A549 (cell line): ENCODE measurements at regions of chr11 and their contacts with region 1.

Region 1: GRCh38 chr11:47161134-47161854 is 15.4 kb downstream of the ARFGAP2 start:
- DNase-seq: peak; percentile 75 to 92
- ATAC-seq: peak; percentile 79 to 90
- H3K4me3 ChIP-seq: no peak overlapping the region
- H3K27ac ChIP-seq: no peak overlapping the region
- H3K4me1 ChIP-seq: no peaks in the 10 kb centered on the region
- CTCF ChIP-seq: peak; percentile 76
- EP300 ChIP-seq: no peak
- POLR2A ChIP-seq: no peak
- RAD21 ChIP-seq: peak; percentile 66 to 68

Region 2: GRCh38 chr11:46889689-46890475 is 271.4 kb before region 1 on chr11:
- CTCF ChIA-PET with region 1: interaction called, 120 read pairs
- POLR2A ChIA-PET with region 1: no interaction called
- DNase-seq: peak; percentile 62 to 75
- ATAC-seq: peak; percentile 90 to 92
- H3K4me3 ChIP-seq: no peak overlapping the region
- H3K27ac ChIP-seq: no peak overlapping the region
- H3K4me1 ChIP-seq: no peaks in the 10 kb centered on the region
- CTCF ChIP-seq: peak; percentile 91
- EP300 ChIP-seq: no peak
- POLR2A ChIP-seq: no peak
- RAD21 ChIP-seq: peak; percentile 91 to 96

Region 3: GRCh38 chr11:46896719-46897406 is 264.4 kb before region 1 on chr11:
- CTCF ChIA-PET with region 1: interaction called, 120 read pairs
- POLR2A ChIA-PET with region 1: no interaction called
- DNase-seq: peak; percentile 58 to 68
- ATAC-seq: peak; percentile 69 to 84; a peak in 5 of 6 replicates
- H3K4me3 ChIP-seq: no peak overlapping the region
- H3K27ac ChIP-seq: no peak overlapping the region
- H3K4me1 ChIP-seq: no peaks in the 10 kb centered on the region
- CTCF ChIP-seq: peak; percentile 54
- EP300 ChIP-seq: no peak
- POLR2A ChIP-seq: no peak
- RAD21 ChIP-seq: 0 out of 5 replicates have a peak, but pooled peaks of 1 of the 2 experiments have one; percentile 14